ENCODE measurements at regions of chr1 and their contacts with region 1.

Region 1: DNA sequence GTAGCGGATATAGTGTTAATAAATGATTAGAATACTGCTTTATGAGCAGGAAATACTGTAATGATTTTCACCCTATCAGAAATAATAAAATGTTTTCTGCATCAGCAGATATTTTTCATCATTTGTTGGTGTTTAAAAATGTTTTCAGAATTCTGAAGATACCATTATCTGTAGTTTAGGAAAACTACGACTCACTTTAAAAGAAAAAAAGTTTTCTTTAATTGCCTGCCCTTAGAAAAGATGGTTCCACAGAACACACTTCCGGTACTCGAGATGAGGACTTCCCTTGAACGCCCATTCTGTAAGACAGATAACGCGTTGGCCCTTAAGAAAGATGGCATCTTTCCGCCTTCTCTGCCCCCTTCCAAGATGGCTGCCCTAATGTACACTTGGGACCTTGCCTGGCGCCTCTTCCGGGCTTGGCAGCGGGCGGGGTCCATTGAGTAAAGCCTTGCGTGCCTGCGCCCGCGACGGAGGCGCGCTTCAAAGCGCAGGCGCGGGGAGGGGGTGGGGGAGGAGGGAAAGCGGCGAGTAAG is at the start of gene SZRD1:
- DNase-seq: peak; percentile 99
- ATAC-seq: peak; percentile 83
- H3K4me3 ChIP-seq: peak within 1 kb of the TSS; percentile 89 to 98 (median 91)
- H3K4me3 Mint-ChIP-seq: peak within 1 kb of the TSS; percentile 99
- H3K27ac ChIP-seq: peak within 1 kb of the TSS; percentile 98 to 99
- H3K27ac Mint-ChIP-seq: peak within 1 kb of the TSS; percentile 100
- H3K4me1 ChIP-seq: peaks cover 18 to 29% of the 10 kb centered on the region in 2 donors
- H3K4me1 Mint-ChIP-seq: peaks cover 36% of the 10 kb centered on the region
- H3K27me3 ChIP-seq: no peaks in the 10 kb centered on the region
- H3K27me3 Mint-ChIP-seq: no peaks in the 10 kb centered on the region
- CTCF ChIP-seq: no peak
- total RNA-seq, gene SZRD1: 109 and 110 TPM in 2 replicates

Region 2: DNA sequence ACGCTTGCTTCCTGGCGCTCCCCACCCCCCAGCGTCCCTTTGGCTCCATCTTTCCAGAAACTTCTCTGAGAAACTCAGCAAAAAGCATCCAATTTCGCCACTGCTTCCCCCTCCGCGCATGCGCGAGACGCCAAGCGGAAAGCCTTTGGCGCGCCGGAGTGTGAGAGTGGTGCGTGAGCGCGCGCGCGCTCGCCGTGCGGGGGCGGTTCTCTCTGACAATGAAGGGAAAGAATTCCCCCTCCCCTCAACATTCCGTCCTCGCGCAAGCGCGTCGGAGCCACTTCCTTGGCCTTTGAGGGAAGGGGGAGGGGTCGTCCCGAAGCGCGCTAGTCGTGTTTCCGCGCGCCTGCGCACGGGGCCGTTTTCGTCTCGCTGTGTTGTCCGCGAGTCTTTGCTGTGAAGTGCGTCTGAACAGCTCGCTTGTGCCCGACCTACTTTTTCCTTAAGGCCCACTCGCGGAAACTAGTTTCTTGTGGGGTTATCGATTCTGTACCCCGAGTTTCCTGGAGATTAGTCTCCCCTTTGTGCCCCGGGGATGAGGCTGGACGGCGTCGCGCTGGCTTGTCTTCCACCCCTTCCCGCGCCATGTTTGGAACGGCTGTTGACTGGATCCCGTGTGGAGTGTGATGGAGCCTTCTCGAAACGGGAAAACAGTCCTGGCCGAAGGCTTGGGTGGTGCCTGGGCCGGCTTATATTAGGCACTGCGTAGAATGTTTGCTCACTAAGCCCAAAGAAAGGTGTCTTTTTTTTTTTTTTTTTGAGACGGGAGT is 530.9 kb before region 1 on chr1:
- CTCF ChIA-PET with region 1: interaction called, 3 read pairs
- POLR2A ChIA-PET with region 1: no interaction called
- intact Hi-C with region 1: loop called (anchors 5 kb)
- DNase-seq: peak; percentile 99
- ATAC-seq: peak; percentile 42
- H3K4me3 ChIP-seq: peak overlapping the region; percentile 82 to 100 (median 97)
- H3K4me3 Mint-ChIP-seq: peak overlapping the region; percentile 97
- H3K27ac ChIP-seq: peak overlapping the region; percentile 98 to 100
- H3K27ac Mint-ChIP-seq: peak overlapping the region; percentile 95
- H3K4me1 ChIP-seq: peaks cover 33 to 43% of the 10 kb centered on the region in 2 donors
- H3K4me1 Mint-ChIP-seq: peaks cover 35% of the 10 kb centered on the region
- H3K27me3 ChIP-seq: no peaks in the 10 kb centered on the region
- H3K27me3 Mint-ChIP-seq: no peaks in the 10 kb centered on the region
- CTCF ChIP-seq: no peak

Region 3: GRCh38 chr1:16078925-16079656 is 287.7 kb before region 1 on chr1:
- CTCF ChIA-PET with region 1: interaction called, 35 read pairs
- POLR2A ChIA-PET with region 1: no interaction called
- intact Hi-C with region 1: no loop called
- DNase-seq: peak; percentile 83
- ATAC-seq: peak; percentile 88
- H3K4me3 ChIP-seq: peak overlapping the region in 4 of 5 experiments; percentile 25 to 58 (median 41)
- H3K4me3 Mint-ChIP-seq: peak overlapping the region; percentile 79
- H3K27ac ChIP-seq: no peak overlapping the region
- H3K27ac Mint-ChIP-seq: peak overlapping the region; percentile 61
- H3K4me1 ChIP-seq: peaks cover 3 to 8% of the 10 kb centered on the region in 2 donors
- H3K4me1 Mint-ChIP-seq: peaks cover 11% of the 10 kb centered on the region
- H3K27me3 ChIP-seq: peaks cover 0 to 15% (median 2%) of the 10 kb centered on the region in 4 experiments
- H3K27me3 Mint-ChIP-seq: peaks cover 8% of the 10 kb centered on the region
- CTCF ChIP-seq: peak; percentile 85

Region 4: GRCh38 chr1:16243936-16244649 is 122.7 kb before region 1 on chr1:
- CTCF ChIA-PET with region 1: interaction called, 11 read pairs
- POLR2A ChIA-PET with region 1: interaction called, 5 read pairs
- intact Hi-C with region 1: loop called (anchors 1 kb)
- DNase-seq: peak; percentile 79
- ATAC-seq: peak; percentile 93
- H3K4me3 ChIP-seq: no peak overlapping the region
- H3K4me3 Mint-ChIP-seq: no peak overlapping the region
- H3K27ac ChIP-seq: no peak overlapping the region
- H3K27ac Mint-ChIP-seq: no peak overlapping the region
- H3K4me1 ChIP-seq: peaks cover 6 to 7% of the 10 kb centered on the region in 2 donors
- H3K4me1 Mint-ChIP-seq: peaks cover 12% of the 10 kb centered on the region
- H3K27me3 ChIP-seq: no peaks in the 10 kb centered on the region
- H3K27me3 Mint-ChIP-seq: no peaks in the 10 kb centered on the region
- CTCF ChIP-seq: peak; percentile 81

Region 5: DNA sequence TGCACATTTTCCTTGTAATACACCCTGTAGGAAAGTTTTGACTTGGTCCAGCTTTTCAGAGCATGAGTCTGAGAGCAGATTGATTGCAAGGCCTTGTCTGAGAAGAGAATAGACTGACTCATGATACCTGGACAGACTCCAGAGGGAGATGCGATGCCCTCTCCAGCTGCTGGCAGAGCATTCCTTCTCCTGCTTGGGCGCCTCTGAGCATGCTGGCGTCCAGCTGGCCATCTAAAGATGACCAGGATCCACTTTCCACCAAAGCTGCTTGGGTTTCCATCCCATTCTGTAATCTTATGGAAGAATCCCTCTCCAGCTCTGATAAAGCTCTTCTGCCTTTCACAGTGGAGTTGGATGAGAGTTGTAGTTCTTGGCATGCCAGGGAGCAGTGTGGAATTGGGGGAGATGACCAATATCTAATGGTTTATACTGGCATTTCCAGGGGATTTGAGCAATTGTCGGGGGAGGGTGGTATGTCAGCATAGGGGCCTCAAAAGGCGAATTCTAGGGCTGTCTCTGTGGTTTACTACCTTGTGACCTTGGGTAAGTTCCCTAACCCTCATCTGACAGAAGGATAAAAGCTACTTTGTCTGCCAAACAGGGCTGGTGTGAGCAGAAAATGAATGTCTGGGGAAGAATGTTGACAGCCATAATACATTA is 19.8 kb after region 1 on chr1:
- CTCF ChIA-PET with region 1: interaction called, 8 read pairs
- POLR2A ChIA-PET with region 1: interaction called, 5 read pairs
- intact Hi-C with region 1: loop called (anchors 1 kb)
- DNase-seq: peak; percentile 47
- ATAC-seq: peak; percentile 26
- H3K4me3 ChIP-seq: peak overlapping the region in 3 of 5 experiments; percentile 23 to 64 (median 39)
- H3K4me3 Mint-ChIP-seq: peak overlapping the region; percentile 32
- H3K27ac ChIP-seq: peak overlapping the region; percentile 66 to 76
- H3K27ac Mint-ChIP-seq: peak overlapping the region; percentile 66
- H3K4me1 ChIP-seq: peaks cover 61 to 66% of the 10 kb centered on the region in 2 donors
- H3K4me1 Mint-ChIP-seq: peaks cover 72% of the 10 kb centered on the region
- H3K27me3 ChIP-seq: no peaks in the 10 kb centered on the region
- H3K27me3 Mint-ChIP-seq: no peaks in the 10 kb centered on the region
- CTCF ChIP-seq: no peak

Region 6: GRCh38 chr1:16440470-16441281 is 73.9 kb after region 1 on chr1 and contains the start of gene NECAP2:
- CTCF ChIA-PET with region 1: interaction called, 14 read pairs
- POLR2A ChIA-PET with region 1: interaction called, 7 read pairs
- intact Hi-C with region 1: loop called (anchors 1 kb)
- DNase-seq: peak; percentile 94
- ATAC-seq: peak; percentile 89
- H3K4me3 ChIP-seq: peak within 1 kb of the TSS; percentile 34 to 100 (median 95)
- H3K4me3 Mint-ChIP-seq: peak within 1 kb of the TSS; percentile 93
- H3K27ac ChIP-seq: peak within 1 kb of the TSS; percentile 97 to 98
- H3K27ac Mint-ChIP-seq: peak within 1 kb of the TSS; percentile 91
- H3K4me1 ChIP-seq: peaks cover 16 to 29% of the 10 kb centered on the region in 2 donors
- H3K4me1 Mint-ChIP-seq: peaks cover 28% of the 10 kb centered on the region
- H3K27me3 ChIP-seq: no peaks in the 10 kb centered on the region
- H3K27me3 Mint-ChIP-seq: no peaks in the 10 kb centered on the region
- CTCF ChIP-seq: peak; percentile 92
- total RNA-seq, gene NECAP2: 77.3 and 78.5 TPM in 2 replicates

Region 7: GRCh38 chr1:16644193-16644481 is 277.3 kb after region 1 on chr1:
- CTCF ChIA-PET with region 1: interaction called, 4 read pairs
- POLR2A ChIA-PET with region 1: no interaction called
- intact Hi-C with region 1: loop called (anchors 10 kb)
- DNase-seq: no peak
- ATAC-seq: no peak
- H3K4me3 ChIP-seq: peak overlapping the region; percentile 69 to 90 (median 78)
- H3K4me3 Mint-ChIP-seq: no peak overlapping the region
- H3K27ac ChIP-seq: peak overlapping the region; percentile 82 to 86
- H3K27ac Mint-ChIP-seq: no peak overlapping the region
- H3K4me1 ChIP-seq: peaks cover 29 to 44% of the 10 kb centered on the region in 2 donors
- H3K4me1 Mint-ChIP-seq: peaks cover 10% of the 10 kb centered on the region
- H3K27me3 ChIP-seq: peaks cover 0 to 9% (median 0%) of the 10 kb centered on the region in 4 experiments
- H3K27me3 Mint-ChIP-seq: no peaks in the 10 kb centered on the region
- CTCF ChIP-seq: no peak